Activated T-helper 2 cell treated with anti-CD3 and anti-CD28 coated beads, Interferon-gamma antibody, Interleukin-2, Interleukin-4, amounts not matched to agents 10 μg/mL and 5 μg/mL and 100 μg/mL, durations not matched to agents 14 hours and 24 hours and 36 hours (primary cell): ENCODE measurements at regions of chr3 and their contacts with region 1.

Region 1: DNA sequence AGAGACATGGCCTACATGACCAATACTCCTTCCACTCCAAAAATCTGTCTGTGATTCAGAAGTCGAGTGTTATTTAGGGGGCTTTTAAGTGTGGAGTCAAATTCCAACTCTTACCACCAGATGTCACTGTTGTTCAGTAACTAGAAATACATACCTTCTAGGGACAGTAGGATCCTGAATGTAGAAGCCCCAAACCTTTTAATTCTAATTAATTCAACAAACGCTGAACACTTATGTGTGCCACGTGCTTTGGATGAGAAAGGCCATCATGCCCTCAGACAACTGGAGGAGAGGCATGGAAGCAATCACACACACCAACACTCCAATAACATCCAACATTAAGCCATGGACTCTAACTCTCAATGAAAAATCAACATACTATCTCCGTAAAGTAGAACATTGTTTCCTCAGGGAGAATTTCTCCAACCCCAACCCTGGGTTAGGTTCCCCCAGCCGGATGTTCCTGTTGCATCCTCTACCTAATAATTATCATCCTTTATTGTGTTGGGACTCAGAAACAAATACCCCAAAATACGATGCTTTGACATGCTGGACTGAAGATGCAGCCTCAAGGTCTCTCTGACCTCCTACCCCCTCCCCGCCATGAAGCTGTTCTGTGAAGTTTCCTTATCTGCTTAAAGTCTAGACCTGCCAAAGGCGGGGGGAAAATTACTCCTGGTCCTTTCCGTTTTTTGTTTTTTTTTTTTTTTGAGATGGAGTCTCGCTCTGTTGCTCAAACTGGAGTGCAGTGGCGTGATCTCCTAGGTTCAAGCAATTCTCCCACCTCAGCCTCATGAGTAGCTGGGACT is 8.0 kb upstream of the CCDC13 start:
- DNase-seq: no peak
- H3K4me3 Mint-ChIP-seq: no peak overlapping the region
- H3K27ac Mint-ChIP-seq: no peak overlapping the region
- H3K4me1 Mint-ChIP-seq: peaks cover 2% of the 10 kb centered on the region
- H3K27me3 Mint-ChIP-seq: no peaks in the 10 kb centered on the region

Region 2: GRCh38 chr3:42351207-42351606 is 429.9 kb before region 1 on chr3:
- intact Hi-C with region 1: no loop called
- DNase-seq: no peak
- H3K4me3 Mint-ChIP-seq: no peak overlapping the region
- H3K27ac Mint-ChIP-seq: no peak overlapping the region
- H3K4me1 Mint-ChIP-seq: no peaks in the 10 kb centered on the region
- H3K27me3 Mint-ChIP-seq: peaks cover 5% of the 10 kb centered on the region

Region 3: GRCh38 chr3:42763021-42763420 is 18.1 kb before region 1 on chr3:
- intact Hi-C with region 1: no loop called
- DNase-seq: no peak
- H3K4me3 Mint-ChIP-seq: no peak overlapping the region
- H3K27ac Mint-ChIP-seq: no peak overlapping the region
- H3K4me1 Mint-ChIP-seq: no peaks in the 10 kb centered on the region
- H3K27me3 Mint-ChIP-seq: peaks cover 23% of the 10 kb centered on the region

Region 4: DNA sequence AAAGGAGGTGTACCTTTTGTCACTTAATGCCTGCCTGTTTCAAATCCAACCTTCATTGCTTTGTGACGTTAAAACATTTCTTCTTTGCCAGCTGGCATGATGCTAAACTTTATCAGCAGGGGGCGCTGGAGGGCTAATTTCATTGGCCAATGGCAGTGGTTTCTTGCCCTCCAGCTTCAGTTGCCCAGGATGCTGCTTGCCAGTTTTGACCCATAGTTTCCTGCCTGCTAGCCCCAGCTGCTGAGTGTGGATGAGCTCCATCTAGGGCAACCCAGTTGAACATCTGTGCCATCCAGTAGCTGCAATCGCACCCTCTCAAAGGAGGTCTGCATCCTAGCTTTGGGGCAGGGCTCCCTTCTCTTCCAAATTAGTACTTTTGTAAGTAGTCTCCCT is 50.2 kb after region 1 on chr3:
- intact Hi-C with region 1: loop called (anchors 2 kb)
- DNase-seq: peak; percentile 64
- H3K4me3 Mint-ChIP-seq: no peak overlapping the region
- H3K27ac Mint-ChIP-seq: no peak overlapping the region
- H3K4me1 Mint-ChIP-seq: peaks cover 10% of the 10 kb centered on the region
- H3K27me3 Mint-ChIP-seq: peaks cover 20% of the 10 kb centered on the region

Region 5: GRCh38 chr3:42839616-42840015 is 58.5 kb after region 1 on chr3:
- intact Hi-C with region 1: loop called (anchors 2 kb)
- DNase-seq: peak; percentile 16
- H3K4me3 Mint-ChIP-seq: no peak overlapping the region
- H3K27ac Mint-ChIP-seq: no peak overlapping the region
- H3K4me1 Mint-ChIP-seq: peaks cover 4% of the 10 kb centered on the region
- H3K27me3 Mint-ChIP-seq: peaks cover 5% of the 10 kb centered on the region

Region 6: DNA sequence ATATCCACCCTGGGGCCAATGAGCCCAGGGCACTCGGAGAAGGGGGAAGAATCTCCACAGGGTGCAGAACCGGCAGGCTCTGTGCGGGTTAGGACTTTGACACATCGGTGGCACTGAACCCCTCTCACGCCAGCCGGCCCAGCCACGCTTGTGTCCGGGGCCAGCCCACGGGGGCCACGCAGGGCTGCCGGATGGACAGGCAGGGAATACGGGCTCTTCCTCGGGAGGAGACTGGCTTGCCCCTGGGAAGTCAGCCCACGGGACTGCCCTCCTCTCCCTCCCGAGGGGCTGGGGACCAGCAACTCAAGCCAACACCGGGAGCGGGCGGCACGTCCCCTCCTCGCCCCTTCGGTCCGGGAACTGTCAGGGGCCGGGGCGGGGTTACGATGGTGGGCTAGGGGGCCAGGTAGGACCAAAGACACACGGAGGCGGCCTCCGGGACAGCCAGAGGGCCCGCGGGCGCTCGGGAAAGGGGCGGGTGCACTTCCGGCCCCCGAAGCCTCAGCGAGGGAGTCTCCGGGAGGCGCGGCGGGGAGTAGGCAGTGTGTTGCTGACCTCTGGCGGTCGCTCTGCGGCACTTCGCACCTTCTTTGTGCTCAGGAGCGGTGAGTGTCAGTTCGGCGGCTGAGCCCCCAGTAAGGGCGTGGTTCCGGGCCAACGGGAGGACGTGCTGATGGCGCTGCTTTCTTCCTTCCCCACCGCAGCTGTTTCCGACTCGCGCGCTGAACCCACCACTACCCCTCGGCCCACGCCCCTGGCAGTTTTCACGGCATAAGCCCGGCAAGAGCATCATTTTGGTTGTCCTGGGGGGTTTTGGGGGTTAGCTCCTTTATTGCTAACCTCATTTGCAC is 99.7 kb after region 1 on chr3:
- intact Hi-C with region 1: loop called (anchors 1 kb)
- DNase-seq: peak; percentile 85
- H3K4me3 Mint-ChIP-seq: peak overlapping the region; percentile 83
- H3K27ac Mint-ChIP-seq: peak overlapping the region; percentile 77
- H3K4me1 Mint-ChIP-seq: peaks cover 10% of the 10 kb centered on the region
- H3K27me3 Mint-ChIP-seq: peaks cover 13% of the 10 kb centered on the region